Tibial artery (tissue), 4 donors: ENCODE measurements at regions of chr4 and their contacts with region 1.

Region 1: DNA sequence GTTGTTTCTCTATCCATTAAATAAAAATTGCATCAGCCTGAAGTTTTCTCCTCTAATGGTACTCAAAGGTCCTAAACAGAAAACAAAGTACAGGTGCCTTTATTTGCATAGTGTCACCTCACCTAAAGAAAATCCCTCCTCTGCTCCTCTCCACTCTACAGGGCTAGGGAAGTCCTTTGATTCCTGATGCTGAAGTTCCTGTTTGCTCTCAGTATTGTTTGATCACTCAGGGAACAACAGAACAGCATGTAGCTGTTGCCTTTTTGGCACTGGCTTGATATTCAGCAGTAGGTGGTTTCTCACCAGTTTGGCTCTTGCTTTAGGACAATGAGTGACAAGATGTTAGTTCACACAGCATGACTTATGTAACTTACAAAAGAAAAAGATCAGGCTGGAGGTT is 156.2 kb upstream of the SLC7A11 start:
- DNase-seq: no peak
- H3K4me3 ChIP-seq: no peak overlapping the region
- H3K27ac ChIP-seq: no peak overlapping the region
- H3K4me1 ChIP-seq: peaks cover 0 to 34% (median 5%) of the 10 kb centered on the region in 4 donors
- H3K27me3 ChIP-seq: no peaks in the 10 kb centered on the region
- CTCF ChIP-seq: no peak

Region 2: DNA sequence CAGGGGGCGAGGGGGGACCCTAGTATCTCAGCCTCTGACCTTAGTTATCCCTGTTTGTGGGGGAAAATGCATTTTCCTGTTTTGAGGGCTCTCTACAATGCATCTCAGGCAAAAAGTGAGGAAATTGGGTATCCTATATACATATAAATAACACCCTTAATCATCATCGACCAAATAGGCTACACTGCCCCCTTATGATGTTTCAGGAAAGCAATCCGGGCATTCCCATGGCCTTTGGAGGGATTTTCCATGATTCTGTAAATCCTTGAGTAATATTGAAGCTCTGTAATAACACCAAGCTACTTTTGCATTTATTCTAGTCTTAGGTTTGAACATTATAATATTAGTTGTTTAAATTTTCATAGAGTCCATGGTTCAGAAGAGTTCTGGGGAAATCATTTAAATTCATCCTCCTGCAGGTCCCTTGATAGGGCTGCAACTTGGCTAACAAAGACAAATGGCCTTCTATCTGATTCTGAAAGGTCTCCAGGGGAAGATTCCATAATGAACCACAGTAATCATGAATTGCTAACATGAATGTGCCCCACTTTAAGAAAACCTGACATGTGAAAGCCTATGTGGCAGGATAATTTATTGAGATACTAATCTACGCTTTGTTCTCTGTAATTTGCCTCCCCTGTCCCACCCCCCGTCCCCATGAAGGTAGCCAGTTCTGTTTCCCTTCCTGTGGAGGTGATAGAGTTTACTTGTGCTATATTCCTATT is 1883.7 kb after region 1 on chr4:
- intact Hi-C with region 1: loop called (anchors 5 kb)
- DNase-seq: no peak
- H3K4me3 ChIP-seq: no peak overlapping the region
- H3K27ac ChIP-seq: no peak overlapping the region
- H3K4me1 ChIP-seq: no peaks in the 10 kb centered on the region
- H3K27me3 ChIP-seq: peaks cover 0 to 12% of the 10 kb centered on the region in 2 donors
- CTCF ChIP-seq: no peak